ENCODE measurements at regions of chr16 and their contacts with region 1.

Region 1: GRCh38 chr16:30091474-30092372 is at the start of gene TBX6:
- DNase-seq: peak; percentile 90 to 93 (median 91)
- H3K4me3 ChIP-seq: peak within 1 kb of the TSS in 1 of 2 donors; percentile 72
- H3K4me3 Mint-ChIP-seq: peak within 1 kb of the TSS; percentile 87 to 95 (median 90)
- H3K27ac ChIP-seq: peak within 1 kb of the TSS; percentile 75
- H3K27ac Mint-ChIP-seq: peak within 1 kb of the TSS; percentile 84 to 98 (median 95)
- H3K4me1 ChIP-seq: peaks cover 60% of the 10 kb centered on the region
- H3K4me1 Mint-ChIP-seq: peaks cover 27 to 65% (median 42%) of the 10 kb centered on the region in 4 donors
- H3K27me3 ChIP-seq: no peaks in the 10 kb centered on the region
- H3K27me3 Mint-ChIP-seq: no peaks in the 10 kb centered on the region
- total RNA-seq, gene TBX6: 1.3 to 1.4 TPM

Region 2: DNA sequence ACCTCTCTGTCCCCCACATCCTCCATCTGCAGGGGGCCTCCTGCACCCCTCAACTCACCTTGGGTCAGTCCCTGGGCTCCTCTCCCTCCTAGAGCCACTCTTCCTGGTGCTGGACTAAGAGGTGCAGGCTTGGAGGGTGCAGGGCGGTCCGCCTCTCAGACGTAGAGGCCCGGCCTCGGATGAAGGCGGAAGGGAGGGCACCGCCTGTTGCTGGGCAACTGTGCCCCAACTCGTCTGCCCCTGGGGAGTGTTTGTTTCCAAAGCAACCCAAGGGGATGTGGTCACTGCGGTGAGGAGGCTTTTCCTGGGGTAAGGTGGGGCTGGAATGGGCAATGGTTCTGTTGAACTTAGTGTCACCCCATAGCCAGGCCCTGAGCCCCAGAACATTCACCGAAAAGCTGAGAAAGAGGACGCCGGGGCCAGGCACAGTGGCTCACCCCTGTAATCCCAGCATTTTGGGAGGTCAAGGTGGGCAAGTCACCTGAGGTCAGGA is 345.8 kb before region 1 on chr16 and contains the start of gene C16orf54:
- CTCF ChIA-PET with region 1: no interaction called
- POLR2A ChIA-PET with region 1: no interaction called
- intact Hi-C with region 1: no loop called
- DNase-seq: peak; percentile 98 to 99 (median 98)
- H3K4me3 ChIP-seq: peak within 1 kb of the TSS; percentile 67 to 93
- H3K4me3 Mint-ChIP-seq: peak within 1 kb of the TSS; percentile 96 to 100 (median 99)
- H3K27ac ChIP-seq: peak within 1 kb of the TSS; percentile 94
- H3K27ac Mint-ChIP-seq: peak within 1 kb of the TSS; percentile 98 to 100 (median 100)
- H3K4me1 ChIP-seq: peaks cover 78% of the 10 kb centered on the region
- H3K4me1 Mint-ChIP-seq: peaks cover 39 to 79% (median 54%) of the 10 kb centered on the region in 4 donors
- H3K27me3 ChIP-seq: no peaks in the 10 kb centered on the region
- H3K27me3 Mint-ChIP-seq: peaks cover 0 to 2% of the 10 kb centered on the region in 2 donors
- total RNA-seq, gene C16orf54: 139 to 143 TPM

Region 3: GRCh38 chr16:30052671-30053372 is 38.9 kb before region 1 on chr16:
- CTCF ChIA-PET with region 1: interaction called, 5 read pairs
- POLR2A ChIA-PET with region 1: interaction called, 12 read pairs
- intact Hi-C with region 1: loop called (anchors 1 kb)
- DNase-seq: peak; percentile 80 to 88 (median 82)
- H3K4me3 ChIP-seq: peak overlapping the region; percentile 23 to 64
- H3K4me3 Mint-ChIP-seq: peak overlapping the region; percentile 84 to 93 (median 87)
- H3K27ac ChIP-seq: no peak overlapping the region
- H3K27ac Mint-ChIP-seq: peak overlapping the region in 6 of 7 donors; percentile 53 to 94 (median 79)
- H3K4me1 ChIP-seq: peaks cover 21% of the 10 kb centered on the region
- H3K4me1 Mint-ChIP-seq: peaks cover 10 to 31% (median 23%) of the 10 kb centered on the region in 4 donors
- H3K27me3 ChIP-seq: no peaks in the 10 kb centered on the region
- H3K27me3 Mint-ChIP-seq: no peaks in the 10 kb centered on the region

Region 4: DNA sequence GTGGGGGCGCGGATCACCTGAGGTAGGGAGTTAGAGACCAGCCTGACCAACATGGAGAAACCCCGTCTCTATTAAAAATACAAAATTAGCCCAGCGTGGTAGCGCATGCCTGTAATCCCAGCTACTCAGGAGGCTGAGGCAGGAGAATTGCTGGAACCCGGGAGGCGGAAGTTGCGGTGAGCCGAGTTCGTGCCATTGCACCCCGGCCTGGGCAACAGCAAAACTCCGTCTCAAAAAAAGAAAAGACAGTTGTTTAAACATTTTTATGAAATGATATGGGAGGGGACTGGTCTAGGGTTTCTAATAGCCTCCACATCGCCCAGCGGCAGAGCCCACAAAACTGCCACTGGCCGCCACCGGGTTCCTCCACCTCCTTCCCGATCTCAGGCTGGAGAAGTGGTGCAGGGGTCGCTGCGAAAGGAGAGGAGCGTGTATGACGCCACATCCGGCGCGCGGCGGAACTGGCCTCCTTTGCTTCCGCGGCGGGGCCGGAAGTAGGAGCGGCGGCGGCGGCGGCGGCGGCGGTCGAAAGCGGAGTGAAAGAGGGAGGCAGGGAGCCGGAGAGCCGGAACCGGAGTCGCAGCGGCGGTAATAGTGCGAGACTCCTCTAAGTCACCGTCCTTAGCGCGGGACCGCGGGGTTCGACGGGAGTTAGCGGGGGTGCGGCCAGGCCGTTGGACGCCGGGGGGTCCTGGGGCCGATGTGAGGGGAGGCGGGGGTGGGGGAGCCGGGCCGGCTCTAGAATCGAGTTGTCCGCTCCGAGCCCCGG is 16.0 kb before region 1 on chr16 and contains the start of gene PPP4C:
- CTCF ChIA-PET with region 1: interaction called, 60 read pairs
- POLR2A ChIA-PET with region 1: interaction called, 404 read pairs
- intact Hi-C with region 1: no loop called
- DNase-seq: peak; percentile 89 to 90 (median 90)
- H3K4me3 ChIP-seq: peak within 1 kb of the TSS; percentile 80 to 93
- H3K4me3 Mint-ChIP-seq: peak within 1 kb of the TSS; percentile 92 to 99 (median 94)
- H3K27ac ChIP-seq: peak within 1 kb of the TSS; percentile 89
- H3K27ac Mint-ChIP-seq: peak within 1 kb of the TSS; percentile 96 to 99 (median 98)
- H3K4me1 ChIP-seq: peaks cover 33% of the 10 kb centered on the region
- H3K4me1 Mint-ChIP-seq: peaks cover 20 to 53% (median 34%) of the 10 kb centered on the region in 4 donors
- H3K27me3 ChIP-seq: no peaks in the 10 kb centered on the region
- H3K27me3 Mint-ChIP-seq: no peaks in the 10 kb centered on the region
- total RNA-seq, gene PPP4C: 75.8 to 86.3 TPM

Region 5: DNA sequence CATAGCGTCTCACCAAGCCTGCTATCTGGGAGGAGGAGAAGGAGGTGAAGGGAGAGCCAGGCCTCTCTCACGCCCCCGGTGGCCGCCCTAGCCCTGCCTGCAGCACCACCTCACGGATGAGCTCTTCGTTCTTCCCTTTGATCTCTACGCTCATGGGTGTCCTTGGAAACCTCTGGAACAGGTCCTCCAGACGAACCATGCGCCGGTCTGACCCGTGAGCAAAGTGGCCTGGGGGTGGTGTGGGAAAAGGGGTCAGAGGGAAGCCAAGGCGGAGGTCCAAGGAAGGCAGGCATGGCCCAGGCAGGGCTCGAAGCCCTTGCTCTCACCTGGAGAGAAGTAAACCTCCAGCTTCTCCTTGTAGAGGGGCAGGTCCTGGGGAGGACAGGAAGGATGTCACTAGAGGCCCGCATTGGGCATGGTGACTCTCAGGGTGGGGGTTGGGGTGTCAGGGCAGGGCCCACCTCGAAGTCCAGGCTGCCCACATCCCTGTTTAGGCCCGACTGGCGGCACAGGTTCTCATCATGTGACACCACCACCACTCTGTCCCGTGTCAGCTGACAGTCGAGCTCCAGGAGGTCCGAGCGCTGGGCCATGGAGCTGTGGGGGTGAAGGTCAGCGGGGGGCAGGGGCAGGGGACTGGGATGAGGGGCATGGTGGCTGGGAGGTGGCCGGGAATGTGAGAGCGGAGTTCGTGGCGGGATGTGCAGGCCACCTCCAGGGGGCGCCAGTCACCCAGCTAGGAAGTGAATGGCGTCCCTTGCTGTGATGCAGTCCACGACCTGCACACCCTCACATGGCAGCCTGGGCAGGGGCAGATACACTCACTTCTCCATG is 20.7 kb after region 1 on chr16:
- CTCF ChIA-PET with region 1: interaction called, 7 read pairs
- POLR2A ChIA-PET with region 1: interaction called, 23 read pairs
- intact Hi-C with region 1: no loop called
- DNase-seq: peak in 2 of 5 donors; percentile 35 to 45
- H3K4me3 ChIP-seq: no peak overlapping the region
- H3K4me3 Mint-ChIP-seq: peak overlapping the region in 1 of 8 donors; percentile 10
- H3K27ac ChIP-seq: no peak overlapping the region
- H3K27ac Mint-ChIP-seq: peak overlapping the region in 2 of 7 donors; percentile 35 to 66
- H3K4me1 ChIP-seq: peaks cover 27% of the 10 kb centered on the region
- H3K4me1 Mint-ChIP-seq: peaks cover 11 to 25% (median 17%) of the 10 kb centered on the region in 4 donors
- H3K27me3 ChIP-seq: no peaks in the 10 kb centered on the region
- H3K27me3 Mint-ChIP-seq: no peaks in the 10 kb centered on the region

Region 6: DNA sequence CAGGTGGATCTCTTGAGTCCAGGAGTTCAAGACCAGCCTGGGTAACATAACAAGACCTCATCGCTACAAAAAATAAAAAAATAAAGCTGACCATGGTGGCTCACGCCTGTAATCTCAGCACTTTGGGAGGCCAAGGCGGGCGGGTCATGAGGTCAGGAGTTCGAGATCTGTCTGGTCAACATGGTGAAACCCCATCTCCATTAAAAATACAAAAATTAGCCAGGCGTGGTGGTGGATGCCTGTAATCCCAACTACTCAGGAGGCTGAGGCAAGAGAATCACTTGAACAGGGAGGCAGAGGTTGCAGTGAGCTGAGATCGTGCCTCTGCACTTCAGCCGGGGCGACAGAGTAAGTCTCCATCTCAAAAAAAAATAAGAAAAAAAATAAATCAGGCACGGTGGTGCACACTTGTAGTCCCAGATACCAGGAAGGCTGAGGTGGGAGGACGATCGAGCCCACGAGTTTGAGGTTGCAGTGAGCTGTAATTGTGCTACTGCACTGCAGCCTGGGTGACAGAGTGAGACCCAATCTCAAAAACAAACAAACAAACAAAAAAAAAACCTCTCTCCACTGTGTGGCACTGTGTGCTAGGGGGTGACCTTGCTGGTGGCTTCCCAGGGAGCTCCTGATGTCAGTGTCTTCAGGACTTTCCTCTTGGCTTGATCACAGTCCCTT is 51.1 kb after region 1 on chr16:
- CTCF ChIA-PET with region 1: interaction called, 11 read pairs
- POLR2A ChIA-PET with region 1: interaction called, 7 read pairs
- intact Hi-C with region 1: no loop called
- DNase-seq: peak in 4 of 5 donors; percentile 39 to 48 (median 43)
- H3K4me3 ChIP-seq: no peak overlapping the region
- H3K4me3 Mint-ChIP-seq: peak overlapping the region in 1 of 8 donors; percentile 25
- H3K27ac ChIP-seq: no peak overlapping the region
- H3K27ac Mint-ChIP-seq: peak overlapping the region in 5 of 7 donors; percentile 25 to 85 (median 62)
- H3K4me1 ChIP-seq: peaks cover 20% of the 10 kb centered on the region
- H3K4me1 Mint-ChIP-seq: peaks cover 12 to 27% (median 13%) of the 10 kb centered on the region in 4 donors
- H3K27me3 ChIP-seq: no peaks in the 10 kb centered on the region
- H3K27me3 Mint-ChIP-seq: no peaks in the 10 kb centered on the region

Region 7: GRCh38 chr16:30370444-30371247 is 278.9 kb after region 1 on chr16 and contains the start of gene TBC1D10B:
- CTCF ChIA-PET with region 1: interaction called, 4 read pairs
- POLR2A ChIA-PET with region 1: interaction called, 19 read pairs
- intact Hi-C with region 1: no loop called
- DNase-seq: peak; percentile 99 to 100 (median 100)
- H3K4me3 ChIP-seq: peak within 1 kb of the TSS; percentile 67 to 88
- H3K4me3 Mint-ChIP-seq: peak within 1 kb of the TSS; percentile 87 to 94 (median 90)
- H3K27ac ChIP-seq: peak within 1 kb of the TSS; percentile 72
- H3K27ac Mint-ChIP-seq: peak within 1 kb of the TSS; percentile 83 to 99 (median 95)
- H3K4me1 ChIP-seq: peaks cover 46% of the 10 kb centered on the region
- H3K4me1 Mint-ChIP-seq: peaks cover 43 to 60% (median 49%) of the 10 kb centered on the region in 4 donors
- H3K27me3 ChIP-seq: no peaks in the 10 kb centered on the region
- H3K27me3 Mint-ChIP-seq: peaks cover 0 to 2% of the 10 kb centered on the region in 2 donors
- total RNA-seq, gene TBC1D10B: 47.0 to 55.3 TPM

Measured in CD4-positive, alpha-beta memory T cell (primary cell).